CD8-positive, alpha-beta T cell (primary cell): ENCODE measurements at regions of chr10 and their contacts with region 1.

Region 1: DNA sequence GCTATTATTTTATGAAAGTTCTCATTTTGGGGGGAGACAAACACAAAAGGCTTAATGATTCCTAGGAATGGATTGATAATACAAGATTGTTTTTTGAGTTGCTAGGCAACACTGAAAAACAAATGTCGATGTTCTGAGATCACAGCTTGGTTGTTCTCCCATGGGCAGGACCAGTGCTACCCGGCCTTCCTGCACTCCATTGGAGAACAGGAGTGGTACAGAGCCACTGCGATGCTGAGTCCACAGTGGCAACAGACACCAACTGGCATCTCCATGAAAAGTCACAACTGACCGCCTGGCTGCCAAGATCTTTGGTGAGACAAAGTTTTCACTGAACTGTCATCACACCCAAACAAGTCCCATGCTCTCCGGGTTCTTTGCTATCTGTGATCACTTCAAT is 68.9 kb upstream of the NMT2 start:
- DNase-seq: no peak
- ATAC-seq: no peak
- H3K4me3 ChIP-seq: no peak overlapping the region
- H3K4me3 Mint-ChIP-seq: no peak overlapping the region
- H3K27ac ChIP-seq: no peak overlapping the region
- H3K27ac Mint-ChIP-seq: no peak overlapping the region
- H3K4me1 ChIP-seq: no peaks in the 10 kb centered on the region
- H3K4me1 Mint-ChIP-seq: peaks cover 18% of the 10 kb centered on the region
- H3K27me3 ChIP-seq: no peaks in the 10 kb centered on the region
- H3K27me3 Mint-ChIP-seq: no peaks in the 10 kb centered on the region
- CTCF ChIP-seq: no peak

Region 2: GRCh38 chr10:14826076-14826829 is 411.1 kb before region 1 on chr10:
- CTCF ChIA-PET with region 1: no interaction called
- POLR2A ChIA-PET with region 1: no interaction called
- intact Hi-C with region 1: no loop called
- DNase-seq: no peak
- ATAC-seq: no peak
- H3K4me3 ChIP-seq: no peak overlapping the region
- H3K4me3 Mint-ChIP-seq: no peak overlapping the region
- H3K27ac ChIP-seq: no peak overlapping the region
- H3K27ac Mint-ChIP-seq: no peak overlapping the region
- H3K4me1 ChIP-seq: no peaks in the 10 kb centered on the region
- H3K4me1 Mint-ChIP-seq: peaks cover 2% of the 10 kb centered on the region
- H3K27me3 ChIP-seq: no peaks in the 10 kb centered on the region
- H3K27me3 Mint-ChIP-seq: no peaks in the 10 kb centered on the region
- CTCF ChIP-seq: no peak

Region 3: GRCh38 chr10:15196021-15196834 is 41.1 kb before region 1 on chr10:
- CTCF ChIA-PET with region 1: no interaction called
- POLR2A ChIA-PET with region 1: no interaction called
- intact Hi-C with region 1: loop called in 1 of 2 experiments (anchors 2 kb)
- DNase-seq: peak in 2 of 9 experiments; percentile 30 to 56
- ATAC-seq: no peak
- H3K4me3 ChIP-seq: no peak overlapping the region
- H3K4me3 Mint-ChIP-seq: peak overlapping the region; percentile 43
- H3K27ac ChIP-seq: no peak overlapping the region
- H3K27ac Mint-ChIP-seq: peak overlapping the region; percentile 60
- H3K4me1 ChIP-seq: peaks cover 14% of the 10 kb centered on the region
- H3K4me1 Mint-ChIP-seq: peaks cover 28% of the 10 kb centered on the region
- H3K27me3 ChIP-seq: no peaks in the 10 kb centered on the region
- H3K27me3 Mint-ChIP-seq: no peaks in the 10 kb centered on the region
- CTCF ChIP-seq: no peak